HEK293 (cell line): ENCODE measurements at regions of chr16 and their contacts with region 1.

Region 1: DNA sequence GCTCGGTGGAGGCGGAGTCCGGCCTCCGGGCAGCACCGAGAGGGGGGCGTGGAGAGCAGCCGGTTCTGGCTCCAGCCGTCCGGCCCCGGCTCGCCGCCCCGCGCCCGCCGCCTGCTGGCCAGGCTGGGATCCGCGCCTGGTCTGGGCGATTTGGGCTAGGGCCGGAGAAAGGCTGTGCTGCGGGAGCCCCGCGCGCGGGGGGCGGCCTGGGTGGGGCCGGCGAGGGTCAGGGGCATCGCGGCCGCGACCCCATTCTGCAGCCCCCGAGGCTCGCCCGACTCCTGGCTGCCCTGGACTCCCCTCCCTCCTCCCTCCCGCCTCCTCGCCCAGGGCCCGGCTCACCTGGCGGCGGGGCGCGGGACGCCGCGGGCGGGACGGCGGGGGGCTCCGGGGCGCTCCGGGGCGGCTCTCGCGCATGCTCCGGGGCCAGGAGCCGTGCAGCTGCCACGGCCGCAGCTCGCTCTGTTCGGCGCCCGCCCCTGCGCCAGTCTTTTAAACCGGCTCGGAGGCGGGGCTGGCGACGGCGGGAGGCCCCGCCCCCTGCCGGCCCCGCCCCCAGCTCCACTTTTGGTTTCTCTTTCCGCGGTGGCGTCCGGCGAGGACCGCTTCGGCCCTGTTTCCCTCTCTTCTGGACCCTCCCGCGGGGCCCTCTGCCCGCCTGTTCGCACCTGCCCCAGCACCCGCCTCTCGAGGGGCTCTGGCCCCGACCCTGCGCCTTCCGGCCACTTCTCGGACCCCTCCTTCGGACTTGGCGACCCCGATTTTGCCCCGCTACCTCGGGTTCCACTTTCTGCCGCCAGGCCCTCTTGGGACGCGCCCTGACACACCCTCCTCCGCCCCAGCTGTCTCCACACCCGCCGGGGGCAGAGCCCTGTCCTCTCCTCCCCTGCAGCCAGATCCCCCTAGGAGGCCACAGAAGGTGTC is at the start of gene SOCS1:
- H3K4me3 ChIP-seq: peak within 1 kb of the TSS; percentile 72
- H3K27ac ChIP-seq: peak within 1 kb of the TSS; percentile 70; the same call in 1 of the 2 replicates
- H3K4me1 ChIP-seq: peaks cover 5% of the 10 kb centered on the region; the same call in 1 of the 2 replicates
- CTCF ChIP-seq: peak; percentile 41

Region 2: DNA sequence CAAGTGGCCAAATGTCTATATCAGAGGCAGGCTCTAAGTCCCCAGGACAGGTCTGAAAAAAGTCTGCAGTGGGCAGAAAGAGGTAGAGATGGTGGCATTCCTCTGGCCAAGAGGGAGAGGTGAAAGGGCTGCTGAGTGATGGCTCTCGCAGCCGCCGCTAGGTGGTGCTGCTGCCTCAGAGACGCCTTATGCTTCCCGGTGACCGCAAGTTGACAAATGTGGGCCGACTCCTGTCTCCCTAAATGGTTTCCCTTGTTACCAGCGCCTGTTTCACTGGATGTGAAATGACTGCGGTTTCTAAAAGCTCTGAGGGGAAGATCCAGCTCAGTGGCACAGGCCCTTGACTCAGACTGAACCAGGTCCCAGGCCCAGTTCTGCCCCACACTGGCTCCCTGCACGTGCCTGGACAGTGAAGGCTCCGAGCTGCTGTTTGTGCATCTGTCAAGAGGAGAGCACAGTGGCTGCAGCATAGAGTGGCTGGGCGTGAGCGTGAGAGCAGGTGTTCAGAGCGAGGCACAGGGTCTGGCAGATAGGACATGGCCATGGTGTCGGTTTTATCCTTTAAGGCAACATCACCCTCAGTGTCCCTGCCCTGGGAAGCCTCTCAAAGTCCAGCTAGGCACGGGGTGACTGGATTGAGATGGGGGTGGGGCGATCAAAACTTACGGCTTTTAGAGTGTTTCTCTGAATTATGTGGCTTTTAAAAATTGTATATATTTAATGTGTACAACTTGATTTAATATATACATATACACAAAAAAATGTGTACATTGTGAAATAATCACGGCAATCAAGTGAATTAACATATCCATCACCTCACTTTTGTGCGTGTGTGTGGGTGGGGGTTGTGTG is 291.7 kb before region 1 on chr16:
- CTCF ChIA-PET with region 1: interaction called, 58 read pairs
- POLR2A ChIA-PET with region 1: interaction called, 13 read pairs
- H3K4me3 ChIP-seq: no peak overlapping the region
- H3K27ac ChIP-seq: no peak overlapping the region
- H3K4me1 ChIP-seq: no peaks in the 10 kb centered on the region
- CTCF ChIP-seq: peak; percentile 84

Region 3: DNA sequence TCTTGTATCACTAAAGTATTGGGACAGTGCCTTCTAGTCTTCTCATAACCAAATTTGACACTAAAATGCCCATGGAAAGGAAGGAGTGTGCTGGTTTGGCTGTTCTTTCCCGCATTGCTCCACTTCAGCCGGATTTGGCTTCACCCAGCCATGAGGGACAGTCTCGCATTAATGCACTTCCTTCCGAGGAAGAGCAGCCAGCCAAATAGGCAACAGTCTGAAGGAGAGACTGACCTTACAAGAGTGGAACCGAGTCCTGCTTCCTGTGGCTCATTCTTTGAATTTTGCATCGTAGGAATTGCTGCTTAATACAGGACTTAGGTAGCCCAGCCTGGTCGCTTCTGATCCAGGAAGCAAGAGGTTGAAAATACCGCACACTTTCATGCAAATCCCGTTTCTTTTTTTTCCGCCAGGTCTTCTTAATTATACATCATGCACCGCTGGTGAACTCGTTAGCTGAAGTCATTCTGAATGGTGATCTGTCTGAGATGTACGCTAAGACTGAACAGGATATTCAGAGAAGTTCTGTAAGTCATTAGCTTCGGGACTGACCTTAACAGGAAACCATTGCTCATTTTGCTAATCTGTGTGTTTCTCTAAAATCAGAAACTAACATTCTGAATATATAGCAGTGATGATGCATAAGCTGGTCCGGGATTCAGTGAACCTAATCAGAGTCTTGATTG is 273.4 kb before region 1 on chr16:
- CTCF ChIA-PET with region 1: interaction called, 9 read pairs
- POLR2A ChIA-PET with region 1: interaction called, 15 read pairs
- H3K4me3 ChIP-seq: no peak overlapping the region
- H3K27ac ChIP-seq: no peak overlapping the region
- H3K4me1 ChIP-seq: no peaks in the 10 kb centered on the region
- CTCF ChIP-seq: no peak

Region 4: DNA sequence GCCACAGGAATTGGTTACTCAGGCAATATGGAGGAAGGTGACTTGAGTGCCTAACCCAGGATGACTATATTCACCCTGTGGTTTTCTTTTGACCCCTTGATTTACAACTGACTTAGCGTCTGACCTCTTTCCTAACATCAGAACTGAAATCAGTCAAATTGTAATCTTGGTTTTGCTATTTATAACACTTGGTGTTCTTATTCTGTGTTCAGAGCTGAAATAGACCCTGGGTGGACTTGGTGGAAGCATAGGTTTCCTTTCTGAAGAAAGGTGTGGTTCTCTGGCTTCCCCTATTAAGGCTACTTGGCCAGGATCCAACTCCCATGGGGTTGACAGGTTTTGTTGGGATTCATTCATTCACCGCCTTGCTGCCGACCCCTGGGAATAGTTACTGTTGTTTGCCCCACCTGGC is 230.9 kb before region 1 on chr16:
- CTCF ChIA-PET with region 1: no interaction called
- POLR2A ChIA-PET with region 1: no interaction called
- H3K4me3 ChIP-seq: no peak overlapping the region
- H3K27ac ChIP-seq: no peak overlapping the region
- H3K4me1 ChIP-seq: no peaks in the 10 kb centered on the region
- CTCF ChIP-seq: no peak

Region 5: DNA sequence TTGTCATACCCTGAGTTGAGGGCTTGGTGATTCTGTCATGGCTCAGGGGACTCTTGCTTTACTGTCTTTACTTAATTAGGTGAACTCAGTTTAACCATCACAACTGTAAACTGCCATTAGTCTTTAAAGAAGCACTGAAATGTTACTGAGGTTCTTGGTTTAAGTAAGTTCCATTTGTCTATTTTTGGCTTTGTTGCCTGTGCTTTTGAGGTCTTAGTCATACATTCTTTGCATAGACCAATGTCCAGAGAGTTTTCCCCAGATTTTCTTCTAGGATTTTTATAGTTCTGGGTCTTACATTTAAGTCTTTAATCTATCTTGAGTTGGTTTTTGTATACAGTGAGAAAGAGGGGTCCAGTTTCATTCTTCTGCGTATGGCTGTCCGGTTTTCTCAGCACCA is 137.5 kb before region 1 on chr16:
- CTCF ChIA-PET with region 1: no interaction called
- POLR2A ChIA-PET with region 1: no interaction called
- H3K4me3 ChIP-seq: no peak overlapping the region
- H3K27ac ChIP-seq: no peak overlapping the region
- H3K4me1 ChIP-seq: no peaks in the 10 kb centered on the region
- CTCF ChIP-seq: no peak

Region 6: DNA sequence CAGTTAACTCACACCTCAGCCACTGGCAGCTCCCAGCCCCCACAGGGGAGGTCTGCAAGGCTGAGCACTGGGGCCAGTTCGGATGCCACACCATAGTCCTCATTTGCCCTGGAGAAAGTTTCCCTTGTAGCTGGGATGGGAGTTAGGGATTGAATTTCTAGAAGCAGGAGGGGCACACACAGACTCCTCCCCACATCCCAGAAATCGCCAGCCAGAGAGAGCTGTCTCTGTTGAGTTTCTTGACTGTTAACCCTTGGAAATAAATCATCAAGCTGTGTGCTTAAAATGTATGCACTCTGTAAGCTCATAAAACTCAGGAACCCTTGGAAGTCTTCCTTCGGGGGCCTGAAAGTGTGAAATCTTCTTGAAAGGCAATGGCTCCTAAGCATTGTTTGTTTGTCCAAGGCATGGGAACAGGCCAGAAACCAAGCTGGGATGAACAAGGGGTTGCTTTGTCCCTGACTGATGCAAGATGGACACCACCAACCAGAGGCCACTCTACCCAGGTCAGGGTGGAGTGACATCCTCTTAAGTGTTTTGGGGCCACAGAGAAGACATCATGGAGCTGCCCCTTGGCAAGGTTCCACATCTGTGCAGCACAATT is 17.8 kb after region 1 on chr16:
- CTCF ChIA-PET with region 1: interaction called, 9 read pairs
- POLR2A ChIA-PET with region 1: interaction called, 10 read pairs
- H3K4me3 ChIP-seq: no peak overlapping the region
- H3K27ac ChIP-seq: peak overlapping the region; percentile 45; the same call in 1 of the 2 replicates
- H3K4me1 ChIP-seq: peaks cover 5% of the 10 kb centered on the region
- CTCF ChIP-seq: no peak

Region 7: DNA sequence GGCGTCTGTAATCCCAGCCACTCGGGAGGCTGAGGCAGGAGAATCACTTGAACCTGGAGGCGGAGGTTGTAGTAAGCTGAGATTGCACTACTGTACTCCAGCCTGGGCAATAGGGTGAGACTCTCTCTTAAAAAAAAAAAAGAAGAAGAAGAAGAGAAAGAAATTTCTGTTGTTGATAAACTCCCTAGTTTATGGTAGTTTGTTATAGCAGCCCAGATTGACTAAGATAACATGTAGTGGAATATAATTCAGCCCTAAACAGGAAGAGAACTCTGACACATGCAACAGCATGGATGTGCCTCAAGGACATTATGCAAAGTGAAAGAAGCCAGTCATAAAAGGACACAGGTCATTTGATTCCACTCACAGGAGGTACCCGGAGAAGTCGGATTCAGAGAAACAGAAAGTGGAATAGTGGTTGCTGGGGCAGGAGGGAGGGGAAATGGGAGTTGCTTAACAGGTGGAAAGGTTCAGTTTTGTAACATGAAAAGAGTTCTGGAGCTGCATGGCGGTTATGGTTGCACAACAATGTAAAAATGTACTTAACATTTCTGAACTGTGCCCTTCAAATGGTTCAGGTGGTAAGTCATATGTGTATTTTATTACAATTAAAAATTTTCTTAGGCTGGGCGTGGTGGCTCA is 51.1 kb after region 1 on chr16:
- CTCF ChIA-PET with region 1: no interaction called
- POLR2A ChIA-PET with region 1: no interaction called
- H3K4me3 ChIP-seq: no peak overlapping the region
- H3K27ac ChIP-seq: no peak overlapping the region
- H3K4me1 ChIP-seq: 0 out of 2 replicates have a peak, but pooled peaks cover 2% of the 10 kb centered on the region
- CTCF ChIP-seq: no peak

Region 8: GRCh38 chr16:11349599-11350276 is 93.7 kb after region 1 on chr16:
- CTCF ChIA-PET with region 1: interaction called, 4 read pairs
- POLR2A ChIA-PET with region 1: interaction called, 10 read pairs
- H3K4me3 ChIP-seq: no peak overlapping the region
- H3K27ac ChIP-seq: peak overlapping the region; percentile 30; the same call in 1 of the 2 replicates
- H3K4me1 ChIP-seq: peaks cover 10% of the 10 kb centered on the region; the same call in 1 of the 2 replicates
- CTCF ChIP-seq: no peak